Pancreas (tissue), 10 donors: ENCODE measurements at regions of chr16 and their contacts with region 1.

Region 1: GRCh38 chr16:30984669-30985400 is at the start of gene HSD3B7:
- DNase-seq: peak; percentile 88 to 100 (median 94)
- ATAC-seq: peak; percentile 89 to 96 (median 94)
- H3K4me3 ChIP-seq: peak within 1 kb of the TSS; percentile 24 to 61 (median 36)
- H3K27ac ChIP-seq: peak within 1 kb of the TSS; percentile 85 to 87 (median 86)
- H3K4me1 ChIP-seq: peaks cover 0 to 7% (median 0%) of the 10 kb centered on the region in 3 donors
- H3K27me3 ChIP-seq: no peaks in the 10 kb centered on the region
- CTCF ChIP-seq: peak; percentile 93 to 97 (median 96)
- total RNA-seq, gene HSD3B7: 14.2 to 32.1 (median 17.3) TPM

Region 2: GRCh38 chr16:31084616-31085260 is 99.9 kb after region 1 on chr16:
- intact Hi-C with region 1: loop called in 1 of 3 experiments (anchors 10 kb)
- DNase-seq: peak in 2 of 6 donors; percentile 15 to 43
- ATAC-seq: no peak
- H3K4me3 ChIP-seq: no peak overlapping the region
- H3K27ac ChIP-seq: no peak overlapping the region
- H3K4me1 ChIP-seq: no peaks in the 10 kb centered on the region
- H3K27me3 ChIP-seq: no peaks in the 10 kb centered on the region
- CTCF ChIP-seq: no peak

Region 3: GRCh38 chr16:31157136-31157535 is 172.3 kb after region 1 on chr16:
- intact Hi-C with region 1: loop called in 1 of 3 experiments (anchors 5 kb)
- DNase-seq: peak in 1 of 6 donors; percentile 38
- ATAC-seq: peak; percentile 51 to 85 (median 73)
- H3K4me3 ChIP-seq: peak overlapping the region in 1 of 4 donors; percentile 6
- H3K27ac ChIP-seq: no peak overlapping the region
- H3K4me1 ChIP-seq: peaks cover 0 to 10% (median 0%) of the 10 kb centered on the region in 3 donors
- H3K27me3 ChIP-seq: no peaks in the 10 kb centered on the region
- CTCF ChIP-seq: no peak

Region 4: GRCh38 chr16:31382485-31383161 is 397.8 kb after region 1 on chr16:
- intact Hi-C with region 1: loop called in 1 of 3 experiments (anchors 2 kb)
- DNase-seq: peak; percentile 68 to 87 (median 78)
- ATAC-seq: peak; percentile 42 to 78 (median 75)
- H3K4me3 ChIP-seq: no peak overlapping the region
- H3K27ac ChIP-seq: no peak overlapping the region
- H3K4me1 ChIP-seq: peaks cover 9 to 23% (median 17%) of the 10 kb centered on the region in 3 donors
- H3K27me3 ChIP-seq: no peaks in the 10 kb centered on the region
- CTCF ChIP-seq: peak; percentile 47 to 66 (median 60)

Region 5: GRCh38 chr16:31440516-31441184 is 455.8 kb after region 1 on chr16:
- intact Hi-C with region 1: loop called in 2 of 3 experiments (anchors 5 to 10 kb)
- DNase-seq: peak in 1 of 6 donors; percentile 9
- ATAC-seq: no peak
- H3K4me3 ChIP-seq: no peak overlapping the region
- H3K27ac ChIP-seq: no peak overlapping the region
- H3K4me1 ChIP-seq: no peaks in the 10 kb centered on the region
- H3K27me3 ChIP-seq: no peaks in the 10 kb centered on the region
- CTCF ChIP-seq: no peak

Region 6: GRCh38 chr16:31451681-31452351 is 467.0 kb after region 1 on chr16:
- intact Hi-C with region 1: loop called in 2 of 3 experiments (anchors 5 to 10 kb)
- DNase-seq: peak in 3 of 6 donors; percentile 53 to 79 (median 59)
- ATAC-seq: peak; percentile 79 to 88 (median 84)
- H3K4me3 ChIP-seq: no peak overlapping the region
- H3K27ac ChIP-seq: no peak overlapping the region
- H3K4me1 ChIP-seq: peaks cover 3 to 36% (median 5%) of the 10 kb centered on the region in 3 donors
- H3K27me3 ChIP-seq: no peaks in the 10 kb centered on the region
- CTCF ChIP-seq: peak in 2 of 4 donors; percentile 19 to 25